Transverse colon (tissue), 4 donors: ENCODE measurements at regions of chr15 and their contacts with region 1.

Region 1: DNA sequence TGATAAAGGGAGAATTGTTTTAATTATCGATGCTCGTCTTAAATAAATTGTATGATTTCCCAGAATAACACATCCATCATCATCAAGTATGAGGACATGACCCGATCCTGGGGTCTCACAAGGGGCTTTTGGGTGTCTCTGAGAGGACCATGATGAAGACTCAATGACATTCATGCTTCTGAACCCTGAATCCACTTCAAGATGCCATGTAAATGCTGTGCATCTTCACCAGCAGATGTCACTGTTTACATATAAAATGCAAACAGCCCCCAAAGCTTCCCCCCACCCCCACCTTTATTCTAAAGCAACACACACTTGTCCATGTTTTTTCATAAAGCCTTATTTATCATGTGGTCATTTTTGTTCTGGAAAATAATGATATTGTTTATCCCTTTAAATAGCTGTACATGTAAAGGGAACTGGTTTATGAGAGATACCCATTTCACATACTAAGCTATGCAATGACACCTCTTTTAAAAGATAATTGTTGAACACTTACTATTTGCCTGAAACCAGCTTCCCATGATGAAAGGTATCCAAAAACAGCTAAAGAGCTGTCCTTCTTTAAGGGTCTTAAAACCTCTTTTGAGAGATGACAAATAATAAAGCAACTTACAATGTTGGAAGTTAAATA is 69.7 kb upstream of the UBE3A start:
- DNase-seq: no peak
- H3K4me3 ChIP-seq: no peak overlapping the region
- H3K27ac ChIP-seq: no peak overlapping the region
- H3K4me1 ChIP-seq: no peaks in the 10 kb centered on the region
- H3K27me3 ChIP-seq: no peaks in the 10 kb centered on the region
- CTCF ChIP-seq: peak in 4 of 5 experiments; percentile 46 to 56 (median 51)
- EP300 ChIP-seq: no peak
- POLR2A ChIP-seq: no peak

Region 2: GRCh38 chr15:25693321-25694237 is 185.1 kb after region 1 on chr15:
- in situ Hi-C with region 1: no loop called
- intact Hi-C with region 1: loop called (anchors 5 kb)
- DNase-seq: no peak
- H3K4me3 ChIP-seq: no peak overlapping the region
- H3K27ac ChIP-seq: no peak overlapping the region
- H3K4me1 ChIP-seq: no peaks in the 10 kb centered on the region
- H3K27me3 ChIP-seq: no peaks in the 10 kb centered on the region
- CTCF ChIP-seq: peak; percentile 27 to 50 (median 41)
- EP300 ChIP-seq: no peak
- POLR2A ChIP-seq: no peak

Region 3: GRCh38 chr15:25710184-25710583 is 201.7 kb after region 1 on chr15:
- in situ Hi-C with region 1: no loop called
- intact Hi-C with region 1: loop called (anchors 5 kb)
- DNase-seq: peak; percentile 15
- H3K4me3 ChIP-seq: no peak overlapping the region
- H3K27ac ChIP-seq: no peak overlapping the region
- H3K4me1 ChIP-seq: no peaks in the 10 kb centered on the region
- H3K27me3 ChIP-seq: no peaks in the 10 kb centered on the region
- CTCF ChIP-seq: peak; percentile 27 to 59 (median 37)
- EP300 ChIP-seq: no peak
- POLR2A ChIP-seq: no peak

Region 4: DNA sequence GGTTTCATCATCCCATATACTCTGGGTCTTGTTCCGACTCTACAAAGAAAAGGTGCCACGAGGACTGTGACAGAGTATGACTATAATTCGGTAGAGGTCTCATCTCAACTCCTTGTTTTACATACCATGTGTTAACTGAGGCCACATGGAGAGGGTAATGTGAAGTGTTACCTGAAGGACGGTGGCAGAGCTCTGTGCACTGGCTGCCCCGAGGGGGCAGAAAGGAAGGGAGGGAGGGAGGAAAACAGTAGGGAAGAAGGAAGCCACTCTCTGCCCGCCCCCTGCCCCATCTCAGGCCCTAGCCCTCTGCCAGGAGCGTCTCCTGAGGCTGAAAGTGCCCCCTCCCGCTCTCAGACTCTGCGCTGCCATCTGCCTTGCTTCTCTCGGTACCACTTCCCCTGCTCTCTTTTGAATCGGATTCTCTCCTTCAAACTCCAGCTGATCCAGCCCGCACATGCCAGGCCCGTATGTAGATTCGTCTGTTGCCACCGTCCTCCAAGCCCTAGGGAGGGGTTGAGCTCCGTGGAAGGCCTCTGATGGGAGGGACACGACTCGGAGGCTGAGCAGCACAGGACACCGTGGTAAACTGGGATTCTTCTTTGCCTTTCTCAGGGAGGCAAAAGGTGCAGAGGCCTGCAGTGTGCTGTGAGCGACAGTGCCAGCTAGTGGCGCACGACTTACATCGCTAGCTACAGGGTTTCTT is 425.1 kb after region 1 on chr15:
- in situ Hi-C with region 1: loop called in 2 of 4 experiments (anchors 25 kb)
- intact Hi-C with region 1: loop called (anchors 5 kb)
- DNase-seq: peak; percentile 50
- H3K4me3 ChIP-seq: peak overlapping the region in 2 of 4 donors; percentile 21 to 31
- H3K27ac ChIP-seq: no peak overlapping the region
- H3K4me1 ChIP-seq: no peaks in the 10 kb centered on the region
- H3K27me3 ChIP-seq: no peaks in the 10 kb centered on the region
- CTCF ChIP-seq: peak; percentile 47 to 70 (median 59)
- EP300 ChIP-seq: no peak
- POLR2A ChIP-seq: no peak

Region 5: GRCh38 chr15:26260517-26261133 is 752.1 kb after region 1 on chr15:
- in situ Hi-C with region 1: loop called in 1 of 4 experiments (anchors 25 kb)
- intact Hi-C with region 1: loop called (anchors 10 kb)
- DNase-seq: no peak
- H3K4me3 ChIP-seq: no peak overlapping the region
- H3K27ac ChIP-seq: no peak overlapping the region
- H3K4me1 ChIP-seq: no peaks in the 10 kb centered on the region
- H3K27me3 ChIP-seq: no peaks in the 10 kb centered on the region
- CTCF ChIP-seq: peak; percentile 24 to 61 (median 53)
- EP300 ChIP-seq: no peak
- POLR2A ChIP-seq: no peak

Region 6: GRCh38 chr15:26864664-26865191 is 1356.2 kb after region 1 on chr15:
- in situ Hi-C with region 1: loop called in 1 of 4 experiments (anchors 25 kb)
- intact Hi-C with region 1: no loop called
- DNase-seq: no peak
- H3K4me3 ChIP-seq: no peak overlapping the region
- H3K27ac ChIP-seq: no peak overlapping the region
- H3K4me1 ChIP-seq: no peaks in the 10 kb centered on the region
- H3K27me3 ChIP-seq: peaks cover 37% of the 10 kb centered on the region
- CTCF ChIP-seq: peak in 4 of 5 experiments; percentile 14 to 19 (median 17)
- EP300 ChIP-seq: no peak
- POLR2A ChIP-seq: no peak